ENCODE measurements at regions of chr3 and their contacts with region 1.

Region 1: GRCh38 chr3:24185738-24186384 is 240.8 kb downstream of the NR1D2 start:
- DNase-seq: peak; percentile 90 to 96 (median 94)
- H3K4me3 ChIP-seq: no peak overlapping the region
- H3K27ac ChIP-seq: peak overlapping the region in 1 of 2 experiments; percentile 66
- H3K4me1 ChIP-seq: peaks cover 0 to 9% (median 3%) of the 10 kb centered on the region in 4 experiments
- H3K27me3 ChIP-seq: no peaks in the 10 kb centered on the region

Region 2: GRCh38 chr3:24202071-24202470 is 16.2 kb after region 1 on chr3:
- CTCF ChIA-PET with region 1: interaction called, 11 read pairs
- POLR2A ChIA-PET with region 1: no interaction called
- DNase-seq: no peak
- H3K4me3 ChIP-seq: no peak overlapping the region
- H3K27ac ChIP-seq: no peak overlapping the region
- H3K4me1 ChIP-seq: no peaks in the 10 kb centered on the region
- H3K27me3 ChIP-seq: no peaks in the 10 kb centered on the region

Region 3: GRCh38 chr3:24680214-24680967 is 494.5 kb after region 1 on chr3:
- CTCF ChIA-PET with region 1: interaction called, 52 read pairs
- POLR2A ChIA-PET with region 1: no interaction called
- DNase-seq: peak; percentile 69 to 82 (median 80)
- H3K4me3 ChIP-seq: no peak overlapping the region
- H3K27ac ChIP-seq: no peak overlapping the region
- H3K4me1 ChIP-seq: peaks cover 12 to 33% (median 23%) of the 10 kb centered on the region in 4 experiments
- H3K27me3 ChIP-seq: peaks cover 0 to 4% (median 0%) of the 10 kb centered on the region in 5 experiments